K562 (cell line): ENCODE measurements at regions of chr1 and their contacts with region 1.

Region 1: DNA sequence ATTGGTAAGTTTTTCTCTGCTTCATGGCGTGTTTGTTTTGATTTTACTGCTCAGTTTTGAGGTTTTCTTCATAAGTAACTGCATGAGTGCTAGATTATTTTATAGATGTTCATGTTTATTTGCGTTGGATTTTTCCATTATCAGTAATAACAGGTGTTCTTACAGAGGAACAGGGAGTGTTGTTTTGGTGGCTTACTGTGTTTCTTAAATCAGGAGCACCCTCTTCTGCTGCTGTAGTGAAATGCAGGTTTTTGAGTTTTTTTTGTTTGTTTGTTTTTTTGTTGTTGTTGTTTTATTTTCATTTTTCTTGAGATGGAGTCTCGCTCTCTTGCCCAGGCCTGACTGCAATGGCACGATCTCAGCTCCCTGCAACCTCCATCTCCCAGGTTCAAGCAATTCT is 32.6 kb downstream of the CTBS start:
- DNase-seq: peak in 1 of 4 experiments; percentile 9
- ATAC-seq: no peak
- H3K4me3 ChIP-seq: no peak overlapping the region
- H3K27ac ChIP-seq: no peak overlapping the region
- H3K4me1 ChIP-seq: no peaks in the 10 kb centered on the region
- H3K27me3 ChIP-seq: no peaks in the 10 kb centered on the region
- CTCF ChIP-seq: peak; percentile 25 to 58 (median 46); a peak in 3 of 6 replicates
- EP300 ChIP-seq: no peak
- POLR2A ChIP-seq: no peak
- RAD21 ChIP-seq: peak; percentile 43 to 71

Region 2: DNA sequence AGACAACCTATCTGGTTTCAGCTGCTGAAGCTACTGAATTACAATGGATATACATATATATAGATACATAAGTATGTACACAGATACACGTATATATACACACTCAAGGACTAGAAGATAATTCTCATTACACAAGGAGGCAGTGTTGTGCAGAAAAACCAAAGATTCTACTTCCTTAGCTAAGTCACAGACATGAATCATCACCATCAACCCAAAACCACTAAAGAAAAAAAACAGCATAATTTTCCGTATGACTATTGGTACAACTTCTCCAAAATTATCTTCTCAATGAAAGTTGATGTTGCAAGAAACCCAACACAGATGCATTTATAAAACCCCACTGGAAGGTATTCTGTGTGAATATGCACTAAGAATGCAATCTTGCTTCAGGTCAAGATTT is 99.4 kb before region 1 on chr1:
- CTCF ChIA-PET with region 1: interaction called, 7 read pairs
- POLR2A ChIA-PET with region 1: no interaction called
- in situ Hi-C with region 1: no loop called
- intact Hi-C with region 1: loop called (anchors 1 kb)
- DNase-seq: peak in 3 of 4 experiments; percentile 16 to 65 (median 34)
- ATAC-seq: peak; percentile 91
- H3K4me3 ChIP-seq: no peak overlapping the region
- H3K27ac ChIP-seq: no peak overlapping the region
- H3K4me1 ChIP-seq: no peaks in the 10 kb centered on the region; a peak in 1 of 5 replicates
- H3K27me3 ChIP-seq: no peaks in the 10 kb centered on the region
- CTCF ChIP-seq: peak; percentile 42 to 80 (median 52); a peak in 5 of 6 replicates
- EP300 ChIP-seq: no peak
- POLR2A ChIP-seq: no peak
- RAD21 ChIP-seq: peak; percentile 93 to 98

Region 3: DNA sequence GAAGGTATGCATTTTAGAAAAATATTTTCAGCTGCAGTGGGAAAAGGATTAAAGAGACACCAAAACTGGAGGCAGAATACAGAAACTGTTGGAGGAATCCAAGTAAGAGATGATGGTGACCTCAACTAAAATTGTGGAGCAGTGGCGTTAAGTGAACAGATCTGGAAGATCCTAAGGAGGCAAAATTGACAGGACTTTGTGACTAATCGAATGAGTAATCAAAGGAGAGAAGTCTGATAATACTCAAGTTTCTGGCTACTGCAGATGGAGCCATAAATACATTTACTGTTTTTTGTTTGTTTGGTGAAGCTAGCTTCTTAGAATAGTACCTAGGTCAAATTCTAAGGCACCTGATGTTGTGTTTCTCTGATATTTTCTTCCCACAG is 29.5 kb after region 1 on chr1:
- CTCF ChIA-PET with region 1: no interaction called
- POLR2A ChIA-PET with region 1: no interaction called
- in situ Hi-C with region 1: no loop called
- intact Hi-C with region 1: no loop called
- DNase-seq: no peak
- ATAC-seq: no peak
- H3K4me3 ChIP-seq: no peak overlapping the region
- H3K27ac ChIP-seq: no peak overlapping the region
- H3K4me1 ChIP-seq: peaks cover 8 to 10% of the 10 kb centered on the region in 2 experiments; a peak in 4 of 5 replicates
- H3K27me3 ChIP-seq: no peaks in the 10 kb centered on the region
- CTCF ChIP-seq: no peak
- EP300 ChIP-seq: no peak
- POLR2A ChIP-seq: no peak
- RAD21 ChIP-seq: no peak

Region 4: DNA sequence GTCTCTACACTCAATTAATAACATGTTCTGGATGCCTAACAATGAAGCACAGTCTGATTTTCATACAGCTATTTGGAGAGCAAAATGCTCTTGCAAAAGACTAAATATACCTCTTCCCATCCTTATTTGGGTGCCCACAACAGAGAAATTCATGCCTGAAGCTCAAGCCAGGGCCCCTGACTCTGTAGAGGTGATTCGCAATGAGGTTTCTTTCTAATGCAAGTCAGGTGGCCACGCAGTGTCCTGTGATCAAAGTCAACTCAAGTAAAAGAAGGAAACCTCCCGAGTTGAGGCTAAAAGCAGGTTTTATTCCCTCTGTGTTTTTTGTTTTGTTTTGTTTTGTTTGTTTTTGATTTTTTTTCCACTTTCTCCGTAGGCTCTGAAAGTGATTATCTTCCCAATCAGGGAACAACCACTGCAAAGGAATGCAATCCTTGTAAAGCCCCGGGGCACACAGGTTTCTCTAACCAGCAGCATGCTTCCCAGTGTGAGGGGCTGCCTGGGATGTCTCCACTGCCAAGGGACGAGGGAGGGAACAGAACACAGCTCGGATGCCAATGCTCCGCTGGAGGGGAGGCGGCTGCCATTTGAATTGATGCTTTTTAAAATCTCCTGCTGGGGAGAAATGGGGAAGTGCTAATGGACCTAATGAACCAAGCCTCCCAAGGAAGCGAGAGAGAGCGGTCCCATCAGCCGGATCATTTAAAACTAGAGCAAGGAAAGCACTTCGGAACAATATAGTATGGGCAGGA is 222.4 kb after region 1 on chr1:
- CTCF ChIA-PET with region 1: no interaction called
- POLR2A ChIA-PET with region 1: no interaction called
- in situ Hi-C with region 1: no loop called
- intact Hi-C with region 1: no loop called
- DNase-seq: no peak
- ATAC-seq: no peak
- H3K4me3 ChIP-seq: no peak overlapping the region
- H3K27ac ChIP-seq: no peak overlapping the region
- H3K4me1 ChIP-seq: no peaks in the 10 kb centered on the region
- H3K27me3 ChIP-seq: peaks cover 20 to 38% of the 10 kb centered on the region in 2 experiments; a peak in 4 of 5 replicates
- CTCF ChIP-seq: no peak
- EP300 ChIP-seq: no peak
- POLR2A ChIP-seq: no peak
- RAD21 ChIP-seq: no peak